Psoas muscle (tissue), 8 donors: ENCODE measurements at regions of chr11 and their contacts with region 1.

Region 1: DNA sequence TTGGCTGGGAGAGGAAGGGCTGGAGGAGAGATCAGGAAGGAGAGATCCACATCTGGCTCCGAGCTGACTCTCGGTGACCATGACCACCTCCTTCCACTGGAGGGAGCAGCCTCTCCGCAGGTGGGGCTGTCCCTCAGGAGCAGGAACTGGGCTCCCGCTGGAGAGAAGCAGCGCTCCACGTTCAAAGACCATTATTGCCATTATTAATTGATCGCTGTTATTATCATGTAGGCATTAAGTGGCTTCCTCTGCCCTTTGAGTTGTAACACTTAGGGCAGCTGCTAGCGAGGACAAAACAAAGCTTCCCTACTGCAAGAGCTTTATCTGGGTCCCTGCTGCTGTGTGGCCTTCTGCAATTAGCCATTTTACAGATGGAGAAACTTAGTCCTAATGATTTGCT is 251.9 kb downstream of the ST3GAL4 start:
- DNase-seq: peak in 1 of 2 donors; percentile 38
- ATAC-seq: peak; percentile 58 to 70 (median 66)
- H3K4me3 ChIP-seq: no peak overlapping the region
- H3K27ac ChIP-seq: no peak overlapping the region
- H3K4me1 ChIP-seq: no peaks in the 10 kb centered on the region
- H3K27me3 ChIP-seq: peaks cover 0 to 4% (median 0%) of the 10 kb centered on the region in 3 donors
- CTCF ChIP-seq: peak; percentile 64

Region 2: GRCh38 chr11:126647735-126648134 is 40.4 kb after region 1 on chr11:
- intact Hi-C with region 1: no loop called
- DNase-seq: no peak
- ATAC-seq: no peak
- H3K4me3 ChIP-seq: no peak overlapping the region
- H3K27ac ChIP-seq: no peak overlapping the region
- H3K4me1 ChIP-seq: no peaks in the 10 kb centered on the region
- H3K27me3 ChIP-seq: peaks cover 0 to 13% (median 0%) of the 10 kb centered on the region in 3 donors
- CTCF ChIP-seq: no peak

Region 3: GRCh38 chr11:126969865-126970479 is 362.6 kb after region 1 on chr11:
- intact Hi-C with region 1: loop called in 1 of 2 experiments (anchors 5 kb)
- DNase-seq: no peak
- ATAC-seq: no peak
- H3K4me3 ChIP-seq: no peak overlapping the region
- H3K27ac ChIP-seq: no peak overlapping the region
- H3K4me1 ChIP-seq: no peaks in the 10 kb centered on the region
- H3K27me3 ChIP-seq: peaks cover 0 to 20% (median 5%) of the 10 kb centered on the region in 3 donors
- CTCF ChIP-seq: peak; percentile 19

Region 4: DNA sequence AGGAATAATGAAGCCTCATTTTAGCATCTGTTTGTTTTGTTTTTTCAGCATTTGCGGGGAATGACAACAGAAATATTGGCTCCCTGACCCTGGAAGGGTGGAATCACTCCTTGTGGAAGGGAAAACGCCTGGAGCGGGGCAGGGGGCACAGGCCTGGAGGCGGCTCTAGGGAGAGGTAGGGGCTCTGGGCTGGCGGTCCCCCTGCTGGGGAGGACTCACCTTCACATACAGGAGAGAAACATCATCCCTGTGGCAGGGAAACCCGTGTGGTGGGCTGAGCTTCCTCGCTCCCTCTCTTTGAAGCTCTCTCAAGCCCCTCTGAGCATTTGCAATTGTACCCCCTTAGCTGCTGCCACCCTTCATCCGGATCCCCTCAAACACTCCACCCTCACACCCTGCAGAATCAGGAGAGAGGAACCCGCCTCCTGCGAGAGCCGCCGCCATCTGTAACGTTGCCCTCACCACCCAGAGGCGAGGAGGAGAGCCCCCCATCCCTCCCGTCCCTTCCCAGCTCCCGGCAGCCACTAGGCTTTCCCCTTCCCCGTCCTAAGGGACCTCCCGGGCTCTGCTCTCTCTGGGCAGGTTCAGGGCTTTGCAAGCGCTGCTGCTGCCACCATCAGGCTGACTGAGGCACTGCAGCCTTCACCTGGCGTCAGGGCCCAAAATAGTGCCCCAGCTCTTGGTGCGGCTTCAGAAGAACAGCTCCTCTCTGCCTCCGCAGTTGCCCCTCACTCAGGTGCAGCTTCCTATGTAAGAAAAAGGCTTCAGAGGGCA is 382.8 kb after region 1 on chr11:
- intact Hi-C with region 1: loop called (anchors 2 to 10 kb)
- DNase-seq: peak; percentile 60 to 74
- ATAC-seq: peak; percentile 74 to 81 (median 76)
- H3K4me3 ChIP-seq: no peak overlapping the region
- H3K27ac ChIP-seq: no peak overlapping the region
- H3K4me1 ChIP-seq: no peaks in the 10 kb centered on the region
- H3K27me3 ChIP-seq: peaks cover 0 to 8% (median 2%) of the 10 kb centered on the region in 3 donors
- CTCF ChIP-seq: peak; percentile 78